ENCODE measurements at regions of chr18 and their contacts with region 1.

Region 1: DNA sequence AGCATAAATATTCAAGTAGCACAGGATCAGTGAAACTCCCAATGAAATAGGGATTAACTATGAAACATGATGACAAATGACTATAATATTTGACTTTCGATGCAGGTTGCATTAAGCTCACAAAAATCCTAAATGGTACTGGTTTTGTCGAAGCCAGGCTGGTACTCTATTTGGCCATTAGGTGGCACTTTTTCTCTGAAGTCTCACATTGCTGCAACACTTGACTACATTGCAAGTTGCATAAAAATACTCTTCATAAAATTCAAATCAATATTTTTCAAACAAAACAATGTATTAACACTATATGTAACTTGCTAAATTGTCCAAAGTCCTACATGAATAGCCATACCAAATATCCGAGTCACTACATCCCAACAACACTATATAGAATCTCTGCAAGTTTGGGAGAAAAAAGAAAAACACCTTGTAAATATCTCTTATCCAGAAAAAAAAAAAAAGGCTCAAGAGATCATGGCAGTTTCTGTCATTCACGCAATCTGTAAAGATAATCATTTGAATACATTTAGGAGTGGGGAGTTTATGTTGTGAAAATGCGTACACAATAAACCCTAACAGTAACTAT is 9.5 kb downstream of the RTTN start:
- DNase-seq: no peak
- ATAC-seq: peak; percentile 50 to 81
- H3K4me3 ChIP-seq: no peak overlapping the region
- H3K27ac ChIP-seq: no peak overlapping the region
- H3K4me1 ChIP-seq: no peaks in the 10 kb centered on the region
- H3K27me3 ChIP-seq: no peaks in the 10 kb centered on the region
- CTCF ChIP-seq: peak; percentile 46 to 79 (median 73)
- POLR2A ChIP-seq: no peak

Region 2: DNA sequence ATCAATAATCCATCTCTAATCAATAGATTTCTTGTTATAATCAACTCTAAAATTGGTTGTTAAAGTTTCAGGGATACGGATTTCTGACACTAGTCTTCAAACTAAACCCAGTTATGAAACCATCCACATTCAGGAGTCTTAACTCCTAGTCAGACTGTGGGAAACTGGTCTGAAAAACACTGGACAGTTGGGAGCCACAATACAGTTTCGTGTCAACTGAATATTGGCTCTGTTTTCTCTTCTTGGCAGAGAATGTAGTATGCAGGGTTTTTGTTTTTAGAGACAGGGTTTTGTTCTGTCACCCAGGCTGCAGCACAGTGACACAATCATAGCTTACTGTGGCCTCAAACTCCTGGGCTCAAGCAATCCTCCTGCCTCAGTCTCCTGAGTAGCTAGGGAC is 113.5 kb before region 1 on chr18:
- in situ Hi-C with region 1: no loop called
- intact Hi-C with region 1: no loop called
- DNase-seq: no peak
- ATAC-seq: no peak
- H3K4me3 ChIP-seq: no peak overlapping the region
- H3K27ac ChIP-seq: no peak overlapping the region
- H3K4me1 ChIP-seq: no peaks in the 10 kb centered on the region
- H3K27me3 ChIP-seq: no peaks in the 10 kb centered on the region
- CTCF ChIP-seq: no peak
- POLR2A ChIP-seq: no peak

Region 3: GRCh38 chr18:70349316-70349715 is 153.4 kb after region 1 on chr18:
- in situ Hi-C with region 1: no loop called
- intact Hi-C with region 1: no loop called
- DNase-seq: no peak
- ATAC-seq: no peak
- H3K4me3 ChIP-seq: no peak overlapping the region
- H3K27ac ChIP-seq: no peak overlapping the region
- H3K4me1 ChIP-seq: no peaks in the 10 kb centered on the region
- H3K27me3 ChIP-seq: no peaks in the 10 kb centered on the region
- CTCF ChIP-seq: no peak
- POLR2A ChIP-seq: no peak

Region 4: DNA sequence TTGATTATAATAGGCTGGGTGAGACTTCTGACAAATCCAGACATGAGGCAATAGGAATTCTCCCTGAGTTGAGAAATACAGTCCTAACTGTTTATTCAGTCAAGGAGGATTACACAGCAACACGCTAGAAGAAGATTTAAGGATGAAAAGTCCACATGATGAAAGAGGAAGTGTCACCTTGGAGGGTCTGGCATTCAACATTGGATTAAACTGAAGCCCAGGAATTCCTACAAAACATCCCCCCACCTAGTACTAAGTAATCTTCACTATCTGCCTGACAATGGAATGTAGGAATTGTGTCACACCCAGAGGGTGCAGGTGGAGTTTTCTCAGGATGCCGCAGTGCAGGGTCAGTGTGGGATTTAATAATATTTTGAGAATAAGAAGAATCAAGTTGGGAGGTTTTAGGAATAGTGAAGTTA is 235.3 kb after region 1 on chr18:
- in situ Hi-C with region 1: loop called in 3 of 4 experiments (anchors 5 to 10 kb)
- intact Hi-C with region 1: loop called (anchors 1 kb)
- DNase-seq: no peak
- ATAC-seq: no peak
- H3K4me3 ChIP-seq: no peak overlapping the region
- H3K27ac ChIP-seq: no peak overlapping the region
- H3K4me1 ChIP-seq: no peaks in the 10 kb centered on the region
- H3K27me3 ChIP-seq: no peaks in the 10 kb centered on the region
- CTCF ChIP-seq: no peak
- POLR2A ChIP-seq: no peak

Region 5: DNA sequence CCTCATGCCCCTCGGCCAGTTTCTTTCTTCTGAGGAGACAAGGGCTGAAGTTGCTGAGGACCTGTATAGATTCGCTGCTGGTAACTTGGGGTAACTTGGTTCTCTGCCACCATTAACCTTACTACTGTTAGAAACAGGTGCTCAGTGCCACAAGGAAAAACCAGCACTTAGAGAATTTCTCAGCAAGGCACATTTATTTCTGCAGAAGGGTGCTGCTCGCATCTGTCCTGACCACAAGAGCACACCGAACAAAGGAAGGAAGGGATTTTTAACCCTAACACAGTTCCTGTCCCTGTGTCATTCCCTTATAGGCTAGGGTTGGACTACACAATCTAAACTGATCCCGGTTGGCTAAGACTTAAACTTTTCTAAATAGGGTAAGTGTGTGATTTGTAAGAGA is 247.0 kb after region 1 on chr18:
- in situ Hi-C with region 1: loop called in 2 of 4 experiments (anchors 5 to 10 kb)
- intact Hi-C with region 1: no loop called
- DNase-seq: no peak
- ATAC-seq: no peak
- H3K4me3 ChIP-seq: no peak overlapping the region
- H3K27ac ChIP-seq: no peak overlapping the region
- H3K4me1 ChIP-seq: no peaks in the 10 kb centered on the region
- H3K27me3 ChIP-seq: no peaks in the 10 kb centered on the region
- CTCF ChIP-seq: no peak
- POLR2A ChIP-seq: no peak

Region 6: GRCh38 chr18:70454704-70455322 is 258.9 kb after region 1 on chr18:
- in situ Hi-C with region 1: no loop called
- intact Hi-C with region 1: loop called (anchors 2 kb)
- DNase-seq: no peak
- ATAC-seq: peak in 1 of 2 donors; percentile 65
- H3K4me3 ChIP-seq: no peak overlapping the region
- H3K27ac ChIP-seq: no peak overlapping the region
- H3K4me1 ChIP-seq: no peaks in the 10 kb centered on the region
- H3K27me3 ChIP-seq: no peaks in the 10 kb centered on the region
- CTCF ChIP-seq: peak; percentile 54 to 79 (median 62)
- POLR2A ChIP-seq: no peak